Activated CD4-positive, alpha-beta memory T cell treated with anti-CD3 and anti-CD28 coated beads for 36 hours (primary cell): ENCODE measurements at regions of chr5 and their contacts with region 1.

Region 1: DNA sequence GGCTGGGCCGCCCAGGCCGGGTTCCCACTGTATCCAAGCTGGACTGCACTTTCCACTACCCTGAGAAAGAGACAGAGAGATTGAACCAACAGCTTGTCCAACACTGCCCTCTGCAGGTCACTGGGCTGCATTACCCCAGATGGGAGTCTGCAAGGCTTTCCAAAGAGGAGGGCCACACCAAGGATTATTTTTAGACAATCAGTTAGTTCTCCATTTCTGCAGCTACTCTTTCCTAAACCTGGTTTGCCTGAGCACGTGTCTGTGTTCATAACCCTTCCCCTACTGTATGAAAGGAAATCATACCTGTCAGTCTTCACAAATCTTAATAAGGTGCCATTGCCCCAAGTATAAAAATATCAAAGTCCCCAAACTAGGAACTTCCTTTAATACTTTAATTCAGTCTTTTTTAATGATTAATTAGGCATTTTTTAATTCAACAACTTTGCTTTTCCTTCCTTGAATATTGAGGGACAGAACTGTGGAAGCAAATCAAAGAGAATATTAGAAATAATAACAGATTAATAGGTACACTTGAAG is 13.4 kb upstream of the FGF1 start:
- DNase-seq: peak; percentile 86
- H3K4me3 Mint-ChIP-seq: no peak overlapping the region
- H3K27ac Mint-ChIP-seq: no peak overlapping the region
- H3K4me1 Mint-ChIP-seq: no peaks in the 10 kb centered on the region
- H3K27me3 Mint-ChIP-seq: peaks cover 6% of the 10 kb centered on the region

Region 2: DNA sequence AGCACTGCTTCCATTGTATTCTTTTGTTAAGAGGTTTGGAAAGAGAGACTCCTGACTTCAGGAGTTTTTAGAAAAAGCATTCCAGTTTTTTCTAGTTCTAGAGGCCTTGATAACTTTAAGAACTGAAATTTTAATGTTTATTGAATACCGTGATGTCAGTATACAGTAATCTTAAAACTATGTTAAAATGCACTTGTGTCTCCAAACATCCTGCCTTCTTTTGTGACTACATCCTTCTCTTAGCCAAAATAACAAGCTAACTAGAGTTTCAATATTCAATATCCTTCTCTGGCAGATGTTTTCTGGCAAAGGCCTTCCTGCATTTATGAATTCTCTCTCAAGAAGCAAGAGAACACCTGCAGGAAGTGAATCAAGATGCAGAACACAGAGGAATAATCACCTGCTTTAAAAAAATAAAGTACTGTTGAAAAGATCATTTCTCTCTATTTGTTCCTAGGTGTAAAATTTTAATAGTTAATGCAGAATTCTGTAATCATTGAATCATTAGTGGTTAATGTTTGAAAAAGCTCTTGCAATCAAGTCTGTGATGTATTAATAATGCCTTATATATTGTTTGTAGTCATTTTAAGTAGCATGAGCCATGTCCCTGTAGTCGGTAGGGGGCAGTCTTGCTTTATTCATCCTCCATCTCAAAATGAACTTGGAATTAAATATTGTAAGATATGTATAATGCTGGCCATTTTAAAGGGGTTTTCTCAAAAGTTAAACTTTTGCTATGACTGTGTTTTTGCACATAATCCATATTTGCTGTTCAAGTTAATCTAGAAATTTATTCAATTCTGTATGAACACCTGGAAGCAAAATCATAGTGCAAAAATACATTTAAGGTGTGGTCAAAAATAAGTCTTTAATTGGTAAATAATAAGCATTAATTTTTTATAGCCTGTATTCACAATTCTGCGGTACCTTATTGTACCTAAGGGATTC is 547.5 kb before region 1 on chr5:
- CTCF ChIA-PET with region 1: interaction called, 3 read pairs
- POLR2A ChIA-PET with region 1: no interaction called
- intact Hi-C with region 1: loop called (anchors 2 kb)
- DNase-seq: peak; percentile 56
- H3K4me3 Mint-ChIP-seq: no peak overlapping the region
- H3K27ac Mint-ChIP-seq: no peak overlapping the region
- H3K4me1 Mint-ChIP-seq: peaks cover 7% of the 10 kb centered on the region
- H3K27me3 Mint-ChIP-seq: no peaks in the 10 kb centered on the region

Region 3: GRCh38 chr5:142587354-142587965 is 111.8 kb before region 1 on chr5:
- CTCF ChIA-PET with region 1: interaction called, 26 read pairs
- POLR2A ChIA-PET with region 1: no interaction called
- intact Hi-C with region 1: no loop called
- DNase-seq: peak; percentile 30
- H3K4me3 Mint-ChIP-seq: no peak overlapping the region
- H3K27ac Mint-ChIP-seq: no peak overlapping the region
- H3K4me1 Mint-ChIP-seq: peaks cover 6% of the 10 kb centered on the region
- H3K27me3 Mint-ChIP-seq: peaks cover 4% of the 10 kb centered on the region

Region 4: DNA sequence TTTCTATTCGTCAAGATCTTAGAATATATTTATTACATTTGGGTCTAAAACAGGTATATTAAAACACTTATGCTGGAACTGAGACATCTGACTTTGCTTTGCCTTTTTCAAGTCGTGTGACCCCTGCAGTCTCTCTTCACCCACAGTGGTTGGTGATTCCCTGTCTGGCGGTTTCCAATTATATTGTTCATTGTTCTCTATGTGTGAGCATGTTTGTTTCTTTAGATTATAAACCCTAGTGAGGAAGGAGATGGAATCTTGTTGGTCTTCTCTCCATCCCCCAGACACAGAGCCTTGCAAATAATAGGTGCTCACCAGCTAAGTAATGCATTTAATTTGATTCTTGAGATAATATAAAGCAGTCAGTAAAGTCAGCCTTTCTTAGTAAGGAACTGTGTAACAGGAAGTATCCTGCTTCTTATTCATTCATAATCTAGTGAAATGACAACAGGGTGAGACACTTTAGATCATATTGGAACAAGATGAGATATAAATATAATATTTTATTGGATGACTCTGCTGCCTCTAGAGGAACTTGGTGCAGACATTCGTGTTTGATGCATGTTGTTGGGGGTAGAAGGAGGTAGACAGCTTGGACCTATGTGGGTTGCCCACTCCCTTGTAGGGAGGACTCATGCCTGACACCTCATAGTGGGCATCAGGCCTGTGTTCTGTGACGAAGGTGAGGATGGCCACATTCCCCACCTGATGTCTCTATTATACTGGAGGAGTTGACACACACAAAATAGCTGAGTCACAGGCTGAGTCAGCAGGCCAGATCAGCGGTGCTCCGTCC is 101.5 kb before region 1 on chr5:
- CTCF ChIA-PET with region 1: interaction called, 10 read pairs
- POLR2A ChIA-PET with region 1: no interaction called
- intact Hi-C with region 1: no loop called
- DNase-seq: peak; percentile 65
- H3K4me3 Mint-ChIP-seq: no peak overlapping the region
- H3K27ac Mint-ChIP-seq: no peak overlapping the region
- H3K4me1 Mint-ChIP-seq: peaks cover 2% of the 10 kb centered on the region
- H3K27me3 Mint-ChIP-seq: peaks cover 8% of the 10 kb centered on the region

Region 5: GRCh38 chr5:142611154-142611553 is 88.1 kb before region 1 on chr5:
- CTCF ChIA-PET with region 1: interaction called, 104 read pairs
- POLR2A ChIA-PET with region 1: no interaction called
- intact Hi-C with region 1: loop called (anchors 1 kb)
- DNase-seq: peak; percentile 85
- H3K4me3 Mint-ChIP-seq: no peak overlapping the region
- H3K27ac Mint-ChIP-seq: no peak overlapping the region
- H3K4me1 Mint-ChIP-seq: no peaks in the 10 kb centered on the region
- H3K27me3 Mint-ChIP-seq: peaks cover 15% of the 10 kb centered on the region

Region 6: DNA sequence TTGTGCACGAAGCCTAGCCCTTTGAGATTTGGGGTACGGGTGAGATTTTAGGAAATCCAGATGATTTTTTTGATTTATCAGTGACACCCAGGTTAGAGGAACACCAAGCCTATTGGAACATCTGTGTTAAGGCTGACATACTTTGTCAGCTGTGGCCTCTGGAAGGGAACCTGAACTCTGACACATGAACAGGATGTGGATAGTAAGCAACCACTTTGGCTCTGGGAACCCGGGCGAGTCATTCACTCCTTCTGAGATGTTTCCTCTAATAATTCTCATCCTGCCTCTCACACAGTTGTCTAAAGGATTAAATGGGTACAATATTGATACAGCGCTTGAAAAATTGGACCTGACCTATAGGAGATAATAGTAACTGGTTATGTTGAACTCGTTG is 81.1 kb before region 1 on chr5:
- CTCF ChIA-PET with region 1: interaction called, 20 read pairs
- POLR2A ChIA-PET with region 1: no interaction called
- intact Hi-C with region 1: no loop called
- DNase-seq: peak; percentile 73
- H3K4me3 Mint-ChIP-seq: no peak overlapping the region
- H3K27ac Mint-ChIP-seq: no peak overlapping the region
- H3K4me1 Mint-ChIP-seq: peaks cover 12% of the 10 kb centered on the region
- H3K27me3 Mint-ChIP-seq: peaks cover 6% of the 10 kb centered on the region

Region 7: DNA sequence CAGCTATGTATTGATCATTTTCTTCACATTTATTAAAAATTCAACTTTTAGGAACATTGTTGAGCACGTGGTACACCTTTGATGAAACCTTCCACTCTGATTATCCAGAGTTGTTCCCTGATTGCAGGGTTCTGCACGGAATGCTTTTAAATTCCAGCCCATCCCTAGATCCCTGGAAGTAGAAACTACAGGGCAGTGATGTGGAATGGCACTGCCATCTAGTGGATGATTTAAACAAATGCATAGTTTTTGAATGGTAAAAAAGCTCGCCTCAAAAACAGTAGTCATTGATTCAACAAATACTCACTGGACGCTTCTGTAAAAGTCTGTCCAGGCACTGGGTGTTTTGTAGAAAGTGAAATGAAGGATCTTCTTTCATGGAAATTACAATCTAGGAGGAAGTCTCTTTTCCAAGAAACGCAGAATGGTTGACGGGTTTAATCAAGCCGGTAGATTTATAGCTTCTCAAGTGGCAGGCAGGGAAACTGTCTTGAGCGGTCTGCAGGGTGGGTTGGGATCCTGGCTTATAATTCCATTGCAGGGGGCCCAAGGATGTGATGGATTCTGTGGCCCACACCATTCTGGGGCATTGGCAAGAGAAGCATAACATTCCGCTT is 189.3 kb after region 1 on chr5:
- CTCF ChIA-PET with region 1: interaction called, 34 read pairs
- POLR2A ChIA-PET with region 1: no interaction called
- intact Hi-C with region 1: no loop called
- DNase-seq: no peak
- H3K4me3 Mint-ChIP-seq: no peak overlapping the region
- H3K27ac Mint-ChIP-seq: no peak overlapping the region
- H3K4me1 Mint-ChIP-seq: no peaks in the 10 kb centered on the region
- H3K27me3 Mint-ChIP-seq: no peaks in the 10 kb centered on the region

Region 8: GRCh38 chr5:142977363-142978051 is 278.3 kb after region 1 on chr5:
- CTCF ChIA-PET with region 1: no interaction called
- POLR2A ChIA-PET with region 1: no interaction called
- intact Hi-C with region 1: no loop called
- DNase-seq: peak; percentile 62
- H3K4me3 Mint-ChIP-seq: peak overlapping the region; percentile 23
- H3K27ac Mint-ChIP-seq: peak overlapping the region; percentile 87
- H3K4me1 Mint-ChIP-seq: peaks cover 62% of the 10 kb centered on the region
- H3K27me3 Mint-ChIP-seq: no peaks in the 10 kb centered on the region